ENCODE measurements at regions of chr6 and their contacts with region 1.

Region 1: GRCh38 chr6:33014841-33015634 is 5.6 kb upstream of the HLA-DOA start:
- DNase-seq: peak in 7 of 9 donors; percentile 60 to 82 (median 75)
- ATAC-seq: peak; percentile 78
- H3K4me3 ChIP-seq: no peak overlapping the region
- H3K4me3 Mint-ChIP-seq: peak overlapping the region in 1 of 10 donors; percentile 0
- H3K27ac ChIP-seq: no peak overlapping the region
- H3K27ac Mint-ChIP-seq: peak overlapping the region in 1 of 9 donors; percentile 5
- H3K4me1 ChIP-seq: peaks cover 12 to 24% of the 10 kb centered on the region in 2 donors
- H3K4me1 Mint-ChIP-seq: peaks cover 8 to 38% (median 26%) of the 10 kb centered on the region in 7 donors
- H3K27me3 ChIP-seq: no peaks in the 10 kb centered on the region
- H3K27me3 Mint-ChIP-seq: peaks cover 0 to 22% (median 2%) of the 10 kb centered on the region in 5 donors

Region 2: DNA sequence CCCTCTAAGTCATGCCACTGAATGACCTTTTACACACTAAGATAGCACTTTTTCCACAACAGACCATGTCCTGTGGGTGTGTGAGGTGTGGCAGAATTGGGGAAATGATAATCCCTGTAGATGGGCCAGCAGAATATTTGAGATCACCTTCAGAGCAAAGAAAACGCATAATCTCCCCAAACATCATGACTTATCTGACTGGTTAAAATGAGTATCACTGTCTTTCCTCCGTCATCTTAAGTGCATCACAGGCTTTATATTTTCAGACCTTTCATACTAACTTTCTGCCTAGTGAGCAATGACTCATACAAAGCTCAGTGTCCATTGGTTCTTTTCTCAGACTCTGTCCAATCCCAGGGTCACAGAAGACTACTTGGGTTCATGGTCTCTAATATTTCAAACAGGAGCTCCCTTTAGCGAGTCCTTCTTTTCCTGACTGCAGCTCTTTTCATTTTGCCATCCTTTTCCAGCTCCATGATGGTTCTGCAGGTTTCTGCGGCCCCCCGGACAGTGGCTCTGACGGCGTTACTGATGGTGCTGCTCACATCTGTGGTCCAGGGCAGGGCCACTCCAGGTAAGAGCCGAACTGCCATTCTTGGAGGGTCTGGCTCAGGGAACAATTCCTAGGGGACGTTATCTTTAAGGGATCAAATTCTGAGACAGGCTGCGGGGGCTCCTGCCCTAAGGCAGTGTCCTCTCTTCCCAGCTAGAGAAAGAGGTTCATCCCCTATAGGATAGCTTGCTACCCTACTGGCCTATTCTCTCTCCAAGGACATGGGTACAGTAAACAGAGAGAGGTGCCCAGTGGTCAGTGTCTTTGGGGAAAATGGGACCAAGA is 60.7 kb after region 1 on chr6 and contains the start of gene HLA-DPB1:
- CTCF ChIA-PET with region 1: interaction called, 3 read pairs
- POLR2A ChIA-PET with region 1: no interaction called
- intact Hi-C with region 1: loop called (anchors 2 to 5 kb)
- DNase-seq: peak in 7 of 9 donors; percentile 53 to 83 (median 67)
- ATAC-seq: peak; percentile 94
- H3K4me3 ChIP-seq: peak within 1 kb of the TSS; percentile 74
- H3K4me3 Mint-ChIP-seq: peak within 1 kb of the TSS; percentile 60 to 91 (median 84)
- H3K27ac ChIP-seq: peak within 1 kb of the TSS; percentile 76
- H3K27ac Mint-ChIP-seq: peak within 1 kb of the TSS; percentile 32 to 93 (median 76)
- H3K4me1 ChIP-seq: peaks cover 5 to 44% of the 10 kb centered on the region in 2 donors
- H3K4me1 Mint-ChIP-seq: peaks cover 34 to 71% (median 54%) of the 10 kb centered on the region in 7 donors
- H3K27me3 ChIP-seq: no peaks in the 10 kb centered on the region
- H3K27me3 Mint-ChIP-seq: peaks cover 0 to 11% (median 2%) of the 10 kb centered on the region in 5 donors
- total RNA-seq, gene HLA-DPB1: 13.7 to 308 (median 43.3) TPM

Region 3: GRCh38 chr6:33082702-33083101 is 67.7 kb after region 1 on chr6:
- CTCF ChIA-PET with region 1: interaction called, 3 read pairs
- POLR2A ChIA-PET with region 1: interaction called, 3 read pairs
- intact Hi-C with region 1: loop called in 1 of 2 experiments (anchors 1 kb)
- DNase-seq: peak in 1 of 9 donors; percentile 11
- ATAC-seq: peak; percentile 68
- H3K4me3 ChIP-seq: no peak overlapping the region
- H3K4me3 Mint-ChIP-seq: no peak overlapping the region
- H3K27ac ChIP-seq: no peak overlapping the region
- H3K27ac Mint-ChIP-seq: no peak overlapping the region
- H3K4me1 ChIP-seq: peaks cover 0 to 23% of the 10 kb centered on the region in 2 donors
- H3K4me1 Mint-ChIP-seq: peaks cover 10 to 44% (median 29%) of the 10 kb centered on the region in 7 donors
- H3K27me3 ChIP-seq: no peaks in the 10 kb centered on the region
- H3K27me3 Mint-ChIP-seq: peaks cover 0 to 4% (median 0%) of the 10 kb centered on the region in 5 donors

Region 4: GRCh38 chr6:33091957-33092356 is 76.9 kb after region 1 on chr6:
- CTCF ChIA-PET with region 1: interaction called, 4 read pairs
- POLR2A ChIA-PET with region 1: no interaction called
- intact Hi-C with region 1: loop called (anchors 1 to 2 kb)
- DNase-seq: peak in 8 of 9 donors; percentile 13 to 55 (median 41)
- ATAC-seq: peak; percentile 91
- H3K4me3 ChIP-seq: no peak overlapping the region
- H3K4me3 Mint-ChIP-seq: no peak overlapping the region
- H3K27ac ChIP-seq: no peak overlapping the region
- H3K27ac Mint-ChIP-seq: no peak overlapping the region
- H3K4me1 ChIP-seq: no peaks in the 10 kb centered on the region
- H3K4me1 Mint-ChIP-seq: peaks cover 0 to 5% (median 0%) of the 10 kb centered on the region in 7 donors
- H3K27me3 ChIP-seq: no peaks in the 10 kb centered on the region
- H3K27me3 Mint-ChIP-seq: peaks cover 12 to 32% (median 18%) of the 10 kb centered on the region in 5 donors

Region 5: GRCh38 chr6:33147807-33148666 is 133.0 kb after region 1 on chr6:
- CTCF ChIA-PET with region 1: no interaction called
- POLR2A ChIA-PET with region 1: no interaction called
- intact Hi-C with region 1: loop called (anchors 1 to 5 kb)
- DNase-seq: peak in 2 of 9 donors; percentile 17 to 19
- ATAC-seq: no peak
- H3K4me3 ChIP-seq: no peak overlapping the region
- H3K4me3 Mint-ChIP-seq: no peak overlapping the region
- H3K27ac ChIP-seq: no peak overlapping the region
- H3K27ac Mint-ChIP-seq: no peak overlapping the region
- H3K4me1 ChIP-seq: no peaks in the 10 kb centered on the region
- H3K4me1 Mint-ChIP-seq: peaks cover 0 to 5% (median 0%) of the 10 kb centered on the region in 7 donors
- H3K27me3 ChIP-seq: peaks cover 0 to 4% of the 10 kb centered on the region in 2 donors
- H3K27me3 Mint-ChIP-seq: peaks cover 7 to 33% (median 20%) of the 10 kb centered on the region in 5 donors

Measured in naive thymus-derived CD4-positive, alpha-beta T cell (primary cell).